Head of caudate nucleus (tissue), 42 donors: ENCODE measurements at regions of chr9 and their contacts with region 1.

Region 1: DNA sequence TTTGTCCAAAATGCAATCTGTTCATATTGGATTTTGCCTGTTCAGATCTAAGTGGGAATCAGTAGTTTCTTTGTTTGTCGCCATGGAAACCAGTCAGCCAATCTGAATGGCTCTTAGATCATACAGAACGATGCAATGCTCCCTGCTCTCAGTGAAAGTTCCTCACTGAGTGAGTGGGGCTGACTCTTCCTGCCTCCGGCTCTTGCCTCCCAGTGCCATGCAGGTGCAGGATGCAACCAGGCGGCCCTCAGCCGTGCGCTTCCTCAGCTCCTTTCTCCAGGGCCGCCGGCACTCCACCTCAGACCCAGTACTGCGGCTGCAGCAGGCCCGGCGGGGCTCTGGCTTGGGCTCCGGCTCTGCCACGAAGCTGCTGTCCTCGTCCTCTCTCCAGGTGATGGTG is at the start of gene PTPDC1:
- DNase-seq: peak; percentile 68 to 96 (median 87)

Region 2: GRCh38 chr9:94166237-94166963 is 82.1 kb after region 1 on chr9:
- intact Hi-C with region 1: loop called (anchors 5 kb)
- DNase-seq: peak; percentile 90 to 98 (median 96)